Activated CD4-positive, alpha-beta memory T cell treated with anti-CD3 and anti-CD28 coated beads, Interleukin-2, amount 10 ng/mL, durations not matched to agents 7 days and 5 days (primary cell): ENCODE measurements at regions of chr7 and their contacts with region 1.

Region 1: DNA sequence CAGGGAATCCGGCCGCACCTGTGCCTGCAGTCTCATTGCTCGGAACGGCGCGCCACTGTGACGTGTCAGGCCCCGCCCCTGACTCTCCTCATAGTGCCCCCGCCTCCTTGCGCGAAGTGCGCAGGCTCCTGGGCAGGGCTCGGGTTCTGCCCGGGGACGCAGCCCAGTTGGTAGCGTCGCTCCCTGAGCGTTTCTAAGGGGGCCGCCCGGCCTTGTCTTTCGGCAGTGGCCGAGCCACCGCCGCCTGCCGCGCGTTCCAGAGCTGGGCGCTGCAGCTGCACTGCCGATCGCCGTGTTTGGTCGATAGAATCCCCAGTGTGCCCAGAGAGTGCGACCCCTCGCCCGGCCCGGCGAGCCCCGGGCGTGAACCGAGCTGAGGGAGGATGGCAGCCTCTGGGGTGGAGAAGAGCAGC is at the start of gene KLHL7:
- DNase-seq: peak; percentile 97
- H3K4me3 Mint-ChIP-seq: peak within 1 kb of the TSS; percentile 80
- H3K27ac Mint-ChIP-seq: peak within 1 kb of the TSS; percentile 85
- H3K4me1 Mint-ChIP-seq: peaks cover 30% of the 10 kb centered on the region
- H3K27me3 Mint-ChIP-seq: no peaks in the 10 kb centered on the region
- total RNA-seq, gene KLHL7: 19.9 to 20.5 TPM

Region 2: DNA sequence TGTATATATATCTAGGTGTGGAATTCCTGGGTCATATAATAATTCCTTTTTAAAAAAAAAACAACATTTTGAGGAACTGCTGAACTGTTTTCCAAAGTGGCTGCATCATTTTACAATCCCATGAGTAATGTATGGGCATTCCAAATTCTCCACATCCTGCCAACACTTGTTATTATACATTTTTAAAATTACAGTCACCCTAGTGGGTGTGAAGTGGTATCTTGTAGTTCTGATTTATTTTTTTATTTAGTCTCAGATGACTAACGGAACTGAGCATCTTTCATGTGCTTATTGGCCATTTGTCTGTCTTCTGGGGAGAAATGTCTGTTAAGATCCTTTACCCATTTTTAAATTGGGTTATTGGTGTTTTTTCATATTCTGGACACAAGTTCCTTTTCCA is 12.1 kb before region 1 on chr7:
- CTCF ChIA-PET with region 1: interaction called, 33 read pairs
- POLR2A ChIA-PET with region 1: interaction called, 3 read pairs
- DNase-seq: no peak
- H3K4me3 Mint-ChIP-seq: no peak overlapping the region
- H3K27ac Mint-ChIP-seq: no peak overlapping the region
- H3K4me1 Mint-ChIP-seq: no peaks in the 10 kb centered on the region
- H3K27me3 Mint-ChIP-seq: peaks cover 23% of the 10 kb centered on the region

Region 3: DNA sequence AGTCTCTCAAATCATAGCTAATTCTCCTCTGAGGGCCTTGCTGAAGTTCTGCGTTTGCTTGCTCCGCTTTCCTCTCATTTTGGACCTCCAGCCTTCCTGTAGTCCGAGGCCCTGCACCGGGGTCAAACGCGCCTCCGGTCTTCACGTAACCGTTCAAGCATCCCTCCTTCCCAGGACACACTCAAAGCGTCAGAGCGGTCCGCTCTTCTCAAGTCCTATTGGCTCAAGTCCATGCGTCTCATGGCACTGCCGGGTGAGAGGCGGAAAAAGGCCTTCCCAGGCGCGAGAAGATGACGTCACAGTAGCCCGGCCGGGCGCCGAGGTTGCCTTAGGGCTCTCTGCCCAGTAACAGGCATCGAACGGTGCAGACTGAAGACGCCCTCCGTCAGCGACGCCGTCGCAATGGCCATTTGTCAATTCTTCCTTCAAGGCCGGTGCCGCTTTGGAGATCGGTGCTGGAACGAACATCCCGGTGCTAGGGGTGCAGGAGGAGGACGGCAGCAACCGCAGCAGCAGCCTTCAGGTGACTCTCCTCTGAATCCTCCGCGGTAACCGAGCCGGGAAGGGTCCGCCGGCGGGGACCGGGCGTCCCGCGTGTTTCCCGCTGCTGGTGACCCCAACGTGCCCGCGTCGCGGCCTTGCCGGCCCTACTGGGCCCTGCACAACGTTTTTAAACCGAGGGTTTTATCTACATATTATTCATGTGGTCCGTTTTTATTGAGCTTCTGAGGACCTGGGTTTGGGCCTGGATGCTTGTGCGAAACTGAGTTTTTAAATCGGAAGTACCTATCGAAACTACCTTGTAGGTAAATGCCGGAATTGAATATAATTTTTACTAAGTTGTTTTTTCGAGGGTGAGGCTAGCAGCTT is 76.3 kb after region 1 on chr7 and contains the start of gene NUP42:
- CTCF ChIA-PET with region 1: interaction called, 9 read pairs
- POLR2A ChIA-PET with region 1: interaction called, 34 read pairs
- DNase-seq: peak; percentile 98
- H3K4me3 Mint-ChIP-seq: peak within 1 kb of the TSS; percentile 90
- H3K27ac Mint-ChIP-seq: peak within 1 kb of the TSS; percentile 97
- H3K4me1 Mint-ChIP-seq: peaks cover 41% of the 10 kb centered on the region
- H3K27me3 Mint-ChIP-seq: peaks cover 3% of the 10 kb centered on the region
- total RNA-seq, gene NUP42: 33.0 to 33.8 TPM